ENCODE measurements at regions of chr18 and their contacts with region 1.

Region 1: DNA sequence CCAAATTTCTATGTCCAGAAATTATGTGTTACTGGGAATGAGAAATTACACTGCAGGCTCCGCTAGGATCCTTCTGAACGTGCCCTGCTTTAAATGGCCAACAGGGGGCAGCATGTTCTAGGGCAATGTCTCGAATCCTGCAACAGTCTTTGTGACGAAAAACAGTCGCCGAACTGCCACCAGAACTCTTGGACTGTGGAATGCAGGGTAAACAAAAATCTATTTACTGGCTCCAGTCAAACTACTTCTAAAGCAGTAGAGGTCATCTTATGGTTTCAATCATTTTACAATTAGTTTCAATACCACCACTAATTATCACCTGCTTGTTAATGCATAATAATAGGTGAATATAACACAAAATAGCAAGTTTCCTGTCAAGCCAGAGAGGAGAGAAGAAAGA is 9.8 kb upstream of the ZNF397 start:
- DNase-seq: peak; percentile 42 to 91 (median 71)
- ATAC-seq: peak; percentile 84 to 95 (median 90)
- H3K4me3 ChIP-seq: no peak overlapping the region
- H3K4me3 Mint-ChIP-seq: peak overlapping the region; percentile 13 to 36 (median 32)
- H3K27ac ChIP-seq: no peak overlapping the region
- H3K27ac Mint-ChIP-seq: peak overlapping the region in 1 of 2 donors; percentile 13
- H3K4me1 ChIP-seq: peaks cover 0 to 3% of the 10 kb centered on the region in 2 experiments
- H3K4me1 Mint-ChIP-seq: peaks cover 3 to 5% (median 3%) of the 10 kb centered on the region in 3 donors
- H3K27me3 ChIP-seq: peaks cover 0 to 2% of the 10 kb centered on the region in 2 experiments
- H3K27me3 Mint-ChIP-seq: peaks cover 0 to 3% of the 10 kb centered on the region in 2 donors

Region 2: GRCh38 chr18:35215026-35215425 is 16.0 kb before region 1 on chr18:
- CTCF ChIA-PET with region 1: interaction called in 1 of 2 experiments, 11 read pairs
- POLR2A ChIA-PET with region 1: no interaction called
- DNase-seq: no peak
- ATAC-seq: no peak
- H3K4me3 ChIP-seq: no peak overlapping the region
- H3K4me3 Mint-ChIP-seq: no peak overlapping the region
- H3K27ac ChIP-seq: no peak overlapping the region
- H3K27ac Mint-ChIP-seq: no peak overlapping the region
- H3K4me1 ChIP-seq: no peaks in the 10 kb centered on the region
- H3K4me1 Mint-ChIP-seq: no peaks in the 10 kb centered on the region
- H3K27me3 ChIP-seq: no peaks in the 10 kb centered on the region
- H3K27me3 Mint-ChIP-seq: peaks cover 0 to 2% of the 10 kb centered on the region in 2 donors

Region 3: GRCh38 chr18:35355140-35355618 is 124.1 kb after region 1 on chr18:
- CTCF ChIA-PET with region 1: interaction called, 6 to 20 read pairs
- POLR2A ChIA-PET with region 1: no interaction called
- DNase-seq: peak; percentile 24 to 78 (median 54)
- ATAC-seq: peak; percentile 81 to 98 (median 94)
- H3K4me3 ChIP-seq: no peak overlapping the region
- H3K4me3 Mint-ChIP-seq: no peak overlapping the region
- H3K27ac ChIP-seq: no peak overlapping the region
- H3K27ac Mint-ChIP-seq: no peak overlapping the region
- H3K4me1 ChIP-seq: no peaks in the 10 kb centered on the region
- H3K4me1 Mint-ChIP-seq: peaks cover 0 to 3% (median 0%) of the 10 kb centered on the region in 3 donors
- H3K27me3 ChIP-seq: peaks cover 0 to 3% of the 10 kb centered on the region in 2 experiments
- H3K27me3 Mint-ChIP-seq: no peaks in the 10 kb centered on the region

Region 4: DNA sequence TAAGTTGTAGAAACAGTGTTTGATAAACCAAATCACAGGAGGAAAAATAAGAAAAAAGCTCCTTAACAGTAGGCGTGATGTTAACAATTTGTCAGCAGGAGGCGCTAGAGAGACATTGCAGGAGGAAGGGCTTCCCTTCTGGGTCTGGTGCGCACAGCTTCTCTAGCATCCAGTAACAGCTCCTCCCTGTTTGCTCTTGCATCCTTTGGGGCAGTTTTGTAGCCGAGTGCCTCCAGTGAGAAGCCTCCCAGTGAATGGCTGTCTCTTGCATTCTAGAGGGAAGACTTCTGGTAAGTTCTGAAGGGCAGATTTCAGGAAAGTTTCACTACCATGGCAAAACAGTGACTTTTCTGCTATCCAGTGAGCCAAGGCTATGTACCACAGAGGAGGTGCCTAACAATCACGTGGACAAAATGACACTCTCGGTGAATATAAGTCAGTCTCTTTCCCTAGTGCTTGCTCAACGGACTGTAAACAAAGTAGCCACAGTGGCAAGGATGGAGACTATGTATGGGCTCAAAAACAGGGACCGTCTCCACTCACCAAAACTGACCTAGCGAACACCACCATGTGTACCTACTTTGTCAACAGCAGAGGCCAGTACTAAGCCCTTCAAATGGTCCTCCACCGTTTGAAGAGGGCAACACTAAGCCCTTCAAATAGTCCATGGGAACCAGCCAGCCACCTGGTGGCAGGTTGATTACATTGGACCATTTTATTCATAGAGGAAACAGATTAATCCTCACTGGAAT is 155.7 kb after region 1 on chr18:
- CTCF ChIA-PET with region 1: interaction called, 6 to 10 read pairs
- POLR2A ChIA-PET with region 1: no interaction called
- DNase-seq: peak; percentile 11 to 90 (median 56)
- ATAC-seq: peak; percentile 81 to 97 (median 92)
- H3K4me3 ChIP-seq: no peak overlapping the region
- H3K4me3 Mint-ChIP-seq: no peak overlapping the region
- H3K27ac ChIP-seq: no peak overlapping the region
- H3K27ac Mint-ChIP-seq: no peak overlapping the region
- H3K4me1 ChIP-seq: peaks cover 0 to 5% of the 10 kb centered on the region in 2 experiments
- H3K4me1 Mint-ChIP-seq: peaks cover 0 to 8% (median 4%) of the 10 kb centered on the region in 3 donors
- H3K27me3 ChIP-seq: peaks cover 0 to 2% of the 10 kb centered on the region in 2 experiments
- H3K27me3 Mint-ChIP-seq: peaks cover 17 to 31% of the 10 kb centered on the region in 2 donors